IMR-90 (cell line): ENCODE measurements at regions of chr4 and their contacts with region 1.

Region 1: DNA sequence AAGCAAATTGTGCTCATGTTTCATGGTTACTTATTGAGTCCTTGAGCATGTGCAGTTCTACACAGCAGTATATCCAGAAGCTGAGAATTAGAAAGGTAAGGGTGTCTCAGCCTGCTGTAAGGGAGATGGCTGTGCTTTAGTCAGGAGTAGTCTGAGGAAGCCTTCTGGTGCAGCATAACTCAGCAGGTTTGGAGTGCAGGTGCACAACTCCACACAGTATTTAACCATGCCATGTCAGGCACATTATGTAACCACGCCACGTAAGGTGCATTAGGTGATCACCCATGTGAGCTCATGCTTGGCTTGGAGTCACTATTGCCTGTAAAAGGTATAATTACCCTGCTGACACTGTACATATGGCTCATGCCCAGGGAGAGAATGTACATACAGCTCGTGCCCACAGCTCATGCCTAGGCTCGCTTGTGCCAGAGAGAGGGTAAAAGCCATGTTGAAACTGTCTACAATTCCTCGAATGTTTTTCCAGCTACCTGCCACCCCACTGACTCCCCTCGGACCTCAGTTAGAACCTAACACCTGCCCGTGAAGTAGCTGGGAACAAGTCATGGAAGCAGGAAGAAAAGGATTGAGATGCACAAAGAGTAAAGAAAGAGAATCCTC is 37.8 kb downstream of the UCHL1 start:
- DNase-seq: no peak
- ATAC-seq: no peak
- H3K4me3 ChIP-seq: no peak overlapping the region
- H3K27ac ChIP-seq: no peak overlapping the region
- H3K4me1 ChIP-seq: no peaks in the 10 kb centered on the region
- H3K27me3 ChIP-seq: peaks cover 5% of the 10 kb centered on the region
- CTCF ChIP-seq: no peak
- POLR2A ChIP-seq: no peak
- RAD21 ChIP-seq: no peak

Region 2: GRCh38 chr4:40301603-40302002 is 993.0 kb before region 1 on chr4:
- CTCF ChIA-PET with region 1: no interaction called
- POLR2A ChIA-PET with region 1: no interaction called
- dilution Hi-C with region 1: no loop called
- in situ Hi-C with region 1: no loop called
- intact Hi-C with region 1: no loop called
- DNase-seq: no peak
- ATAC-seq: no peak
- H3K4me3 ChIP-seq: no peak overlapping the region
- H3K27ac ChIP-seq: no peak overlapping the region
- H3K4me1 ChIP-seq: no peaks in the 10 kb centered on the region
- H3K27me3 ChIP-seq: peaks cover 14% of the 10 kb centered on the region
- CTCF ChIP-seq: no peak
- POLR2A ChIP-seq: no peak
- RAD21 ChIP-seq: no peak

Region 3: DNA sequence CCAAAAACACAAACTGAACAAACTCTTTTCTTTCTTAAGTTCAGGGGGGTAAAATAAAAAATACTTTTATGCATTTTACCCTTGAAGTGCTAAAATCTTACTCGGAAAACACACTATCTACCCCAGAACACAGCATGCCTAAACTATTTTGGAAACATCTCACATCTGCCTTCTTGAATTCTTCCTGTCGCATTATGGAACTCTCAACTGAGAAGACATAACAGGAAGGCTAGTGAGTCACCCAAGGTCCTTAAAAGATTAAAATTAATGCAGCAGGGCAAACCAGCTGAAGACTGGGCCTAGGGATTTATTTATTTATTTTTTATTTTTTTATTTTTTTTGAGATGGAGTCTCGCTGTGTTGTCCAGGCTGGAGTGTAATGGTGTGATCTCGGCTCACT is 288.4 kb before region 1 on chr4:
- CTCF ChIA-PET with region 1: no interaction called
- POLR2A ChIA-PET with region 1: interaction called, 16 read pairs
- dilution Hi-C with region 1: no loop called
- in situ Hi-C with region 1: no loop called
- intact Hi-C with region 1: no loop called
- DNase-seq: peak; percentile 55
- ATAC-seq: no peak
- H3K4me3 ChIP-seq: no peak overlapping the region
- H3K27ac ChIP-seq: no peak overlapping the region
- H3K4me1 ChIP-seq: peaks cover 4% of the 10 kb centered on the region
- H3K27me3 ChIP-seq: no peaks in the 10 kb centered on the region
- CTCF ChIP-seq: no peak
- POLR2A ChIP-seq: no peak
- RAD21 ChIP-seq: no peak

Region 4: DNA sequence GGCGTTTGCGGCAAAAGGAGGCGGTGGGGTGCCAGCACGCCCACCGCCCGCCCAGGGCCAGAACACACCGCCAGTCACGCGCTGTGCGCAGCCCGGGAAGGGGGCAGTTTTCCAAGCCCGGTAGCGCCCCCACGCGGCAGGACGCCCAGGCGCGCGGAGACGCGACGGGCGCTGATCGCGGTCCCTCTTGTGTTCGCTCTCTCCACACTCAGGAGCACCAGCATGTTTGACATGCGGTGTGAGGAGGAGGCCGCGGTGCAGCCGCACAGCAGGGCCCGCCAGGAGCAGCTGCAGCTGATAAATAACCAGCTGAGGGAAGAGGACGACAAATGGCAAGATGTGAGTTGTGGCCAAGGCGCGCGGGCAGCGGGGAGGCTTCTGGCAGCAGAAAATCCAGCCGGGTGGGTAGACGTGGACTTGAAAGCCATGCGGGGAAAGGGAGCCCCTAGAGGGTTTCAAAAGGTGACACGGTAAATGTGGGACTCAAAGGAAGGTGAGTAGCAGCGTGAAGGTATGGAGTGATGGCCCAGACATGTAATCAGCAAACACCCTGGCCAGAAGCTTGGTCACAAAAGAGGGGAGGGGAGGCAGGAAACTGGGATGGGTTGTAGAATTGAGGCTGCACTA is 349.8 kb after region 1 on chr4:
- CTCF ChIA-PET with region 1: no interaction called
- POLR2A ChIA-PET with region 1: interaction called, 10 read pairs
- dilution Hi-C with region 1: no loop called
- in situ Hi-C with region 1: no loop called
- intact Hi-C with region 1: no loop called
- DNase-seq: peak; percentile 16
- ATAC-seq: peak; percentile 82
- H3K4me3 ChIP-seq: no peak overlapping the region
- H3K27ac ChIP-seq: no peak overlapping the region
- H3K4me1 ChIP-seq: no peaks in the 10 kb centered on the region
- H3K27me3 ChIP-seq: peaks cover 20% of the 10 kb centered on the region
- CTCF ChIP-seq: peak; percentile 52
- POLR2A ChIP-seq: no peak
- RAD21 ChIP-seq: peak; percentile 46